ENCODE measurements at regions of chr6 and their contacts with region 1.

Region 1: DNA sequence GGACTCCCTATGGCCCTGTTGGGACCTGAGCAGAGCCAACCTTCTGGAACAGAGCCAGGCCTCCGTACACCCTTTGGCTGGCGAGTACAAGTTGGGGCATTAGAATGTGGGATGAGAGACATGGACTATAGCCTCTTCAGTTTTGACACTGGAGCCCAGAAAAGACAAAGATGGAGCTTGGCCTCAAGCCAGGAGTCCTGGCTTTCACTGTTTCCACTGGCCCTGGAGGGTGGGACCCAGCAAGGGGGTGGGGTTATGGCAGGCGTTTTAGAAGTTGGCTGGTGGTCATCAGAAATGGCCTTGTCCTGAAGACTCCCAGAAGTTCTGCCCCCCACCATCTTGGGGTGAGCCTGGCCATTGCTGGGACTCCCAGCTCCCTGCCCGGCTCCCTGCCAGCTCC is 21.8 kb downstream of the ITPR3 start:
- DNase-seq: no peak
- H3K4me3 Mint-ChIP-seq: no peak overlapping the region
- H3K27ac Mint-ChIP-seq: no peak overlapping the region
- H3K4me1 Mint-ChIP-seq: peaks cover 14% of the 10 kb centered on the region
- H3K27me3 Mint-ChIP-seq: no peaks in the 10 kb centered on the region

Region 2: DNA sequence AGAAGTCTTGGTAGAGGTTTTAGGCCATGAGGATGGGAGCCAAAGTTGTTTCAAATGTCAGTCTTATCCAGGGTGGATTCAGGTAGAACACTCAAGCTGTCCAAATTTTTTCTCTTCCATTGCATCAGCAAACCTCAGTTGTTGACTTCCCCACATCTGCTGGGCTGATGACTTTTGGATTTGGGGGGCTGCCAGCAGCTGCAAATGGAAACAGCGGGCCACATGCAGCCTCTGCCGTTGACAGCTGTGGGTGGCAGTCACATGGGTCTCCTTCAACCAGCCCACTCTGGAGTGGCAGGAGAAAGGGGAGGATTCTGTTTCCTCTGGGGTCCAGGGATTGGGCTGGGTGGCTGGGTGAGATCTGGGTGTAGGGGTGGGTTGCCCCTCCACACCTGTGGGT is 166.7 kb after region 1 on chr6:
- CTCF ChIA-PET with region 1: no interaction called
- intact Hi-C with region 1: no loop called
- DNase-seq: no peak
- H3K4me3 Mint-ChIP-seq: no peak overlapping the region
- H3K27ac Mint-ChIP-seq: no peak overlapping the region
- H3K4me1 Mint-ChIP-seq: peaks cover 17% of the 10 kb centered on the region
- H3K27me3 Mint-ChIP-seq: peaks cover 32% of the 10 kb centered on the region

Region 3: GRCh38 chr6:34546551-34547321 is 903.8 kb after region 1 on chr6:
- CTCF ChIA-PET with region 1: no interaction called
- intact Hi-C with region 1: loop called (anchors 10 kb)
- DNase-seq: no peak
- H3K4me3 Mint-ChIP-seq: no peak overlapping the region
- H3K27ac Mint-ChIP-seq: no peak overlapping the region
- H3K4me1 Mint-ChIP-seq: no peaks in the 10 kb centered on the region
- H3K27me3 Mint-ChIP-seq: no peaks in the 10 kb centered on the region

Measured in activated naive CD4-positive, alpha-beta T cell treated with anti-CD3 and anti-CD28 coated beads for 36 hours (primary cell).